MCF 10A (cell line): ENCODE measurements at regions of chr6 and their contacts with region 1.

Region 1: DNA sequence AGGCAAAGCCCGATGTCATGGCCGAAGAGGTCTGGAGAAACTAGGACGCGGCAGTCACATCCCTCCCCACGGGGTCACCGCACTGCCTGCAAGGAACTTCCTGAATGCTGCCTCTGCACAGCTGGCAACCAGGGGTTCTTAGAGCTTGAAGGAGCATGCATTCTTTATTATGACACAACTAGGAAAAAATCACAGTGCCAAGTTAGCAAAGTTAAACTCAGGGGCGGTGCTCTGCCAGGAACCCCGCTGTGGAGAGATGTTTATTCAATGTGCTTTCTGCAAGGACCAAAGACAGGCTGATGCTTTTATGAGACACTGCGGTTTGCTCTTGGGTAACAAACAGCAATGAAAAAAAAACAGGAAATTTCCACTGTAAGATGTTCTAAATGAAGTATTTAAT is 287.3 kb upstream of the FOXQ1 start:
- DNase-seq: peak; percentile 93
- H3K4me3 Mint-ChIP-seq: peak overlapping the region; percentile 29
- H3K27ac Mint-ChIP-seq: no peak overlapping the region
- H3K4me1 Mint-ChIP-seq: peaks cover 30% of the 10 kb centered on the region
- H3K27me3 Mint-ChIP-seq: no peaks in the 10 kb centered on the region
- CTCF ChIP-seq: no peak

Region 2: DNA sequence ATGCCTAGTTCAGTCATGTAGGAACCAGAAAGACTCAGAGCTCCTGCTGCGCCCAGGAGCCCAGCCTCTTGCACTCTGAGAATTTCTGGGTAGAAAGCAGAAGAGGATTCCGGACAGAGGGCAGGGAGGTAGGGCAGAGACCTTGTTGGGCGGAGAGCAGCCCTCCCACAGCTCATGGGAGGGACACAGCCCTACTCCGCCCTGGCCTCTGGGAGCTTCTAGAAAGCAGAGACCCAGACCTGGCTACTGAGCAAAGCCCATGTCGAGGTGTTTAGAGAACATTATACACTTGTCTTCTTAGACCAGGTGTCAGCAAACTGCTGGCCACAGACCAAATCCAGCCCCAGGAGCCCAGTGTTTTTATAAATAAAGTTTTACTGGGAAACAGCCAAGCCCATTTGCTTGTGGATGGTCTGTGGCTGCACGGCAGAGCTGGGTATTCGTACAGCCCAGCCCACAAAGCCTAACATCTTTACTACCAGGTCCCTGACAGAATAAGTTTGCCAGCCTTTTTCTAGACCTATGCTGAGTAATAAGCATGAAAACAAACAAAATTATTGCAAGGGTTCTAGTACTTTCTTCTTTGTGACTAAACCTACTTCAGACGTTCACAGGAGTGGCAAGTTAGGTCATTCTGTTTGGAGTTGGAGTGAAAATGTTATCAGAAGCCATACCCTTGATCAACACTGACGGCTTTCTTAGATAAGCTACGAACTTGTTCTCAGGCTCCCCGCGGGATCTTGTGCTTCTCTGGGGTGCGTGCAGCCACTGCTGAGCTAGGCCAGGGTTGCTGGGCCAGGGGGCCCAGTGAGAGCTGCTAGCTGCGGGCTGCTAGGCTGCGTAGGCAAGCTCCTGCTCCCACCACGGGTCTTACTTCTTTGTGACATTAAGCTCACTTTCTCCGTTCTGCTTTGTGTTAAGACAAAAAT is 52.2 kb after region 1 on chr6:
- CTCF ChIA-PET with region 1: no interaction called
- POLR2A ChIA-PET with region 1: no interaction called
- intact Hi-C with region 1: no loop called
- DNase-seq: no peak
- H3K4me3 Mint-ChIP-seq: no peak overlapping the region
- H3K27ac Mint-ChIP-seq: no peak overlapping the region
- H3K4me1 Mint-ChIP-seq: peaks cover 5% of the 10 kb centered on the region
- H3K27me3 Mint-ChIP-seq: no peaks in the 10 kb centered on the region
- CTCF ChIP-seq: no peak

Region 3: GRCh38 chr6:1190366-1190765 is 165.8 kb after region 1 on chr6:
- CTCF ChIA-PET with region 1: no interaction called
- POLR2A ChIA-PET with region 1: no interaction called
- intact Hi-C with region 1: loop called (anchors 10 kb)
- DNase-seq: peak; percentile 87
- H3K4me3 Mint-ChIP-seq: peak overlapping the region; percentile 41
- H3K27ac Mint-ChIP-seq: peak overlapping the region; percentile 92
- H3K4me1 Mint-ChIP-seq: peaks cover 22% of the 10 kb centered on the region
- H3K27me3 Mint-ChIP-seq: no peaks in the 10 kb centered on the region
- CTCF ChIP-seq: no peak